ENCODE measurements at regions of chr7 and their contacts with region 1.

Region 1: GRCh38 chr7:51141451-51142003 is 175.1 kb downstream of the COBL start:
- H3K4me3 ChIP-seq: no peak overlapping the region
- H3K27ac ChIP-seq: no peak overlapping the region
- H3K4me1 ChIP-seq: no peaks in the 10 kb centered on the region
- CTCF ChIP-seq: peak; percentile 39; the same call in 1 of the 2 replicates

Region 2: GRCh38 chr7:50664461-50664922 is 477.0 kb before region 1 on chr7:
- CTCF ChIA-PET with region 1: no interaction called
- POLR2A ChIA-PET with region 1: no interaction called
- H3K4me3 ChIP-seq: no peak overlapping the region
- H3K27ac ChIP-seq: no peak overlapping the region
- H3K4me1 ChIP-seq: no peaks in the 10 kb centered on the region
- CTCF ChIP-seq: no peak

Region 3: DNA sequence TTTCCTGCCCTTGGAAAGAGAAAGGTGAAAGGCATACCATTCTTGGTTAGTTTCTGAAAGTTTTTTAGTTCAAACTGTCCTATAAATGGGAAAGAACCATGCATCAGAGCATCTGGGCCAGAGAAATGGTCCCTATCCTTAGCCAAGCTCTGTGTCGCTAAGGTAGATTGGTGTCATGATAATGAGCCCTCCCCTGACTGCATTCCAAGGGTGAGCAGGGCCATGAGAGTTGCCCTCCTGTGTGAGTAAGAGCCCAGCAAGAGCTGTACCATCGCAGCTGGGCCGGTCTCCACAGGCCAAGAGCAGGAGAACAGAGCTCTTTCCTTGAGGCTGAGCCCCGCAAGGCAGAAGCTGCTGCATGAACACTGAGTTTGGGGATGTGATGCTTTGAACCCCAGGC is 389.1 kb before region 1 on chr7:
- CTCF ChIA-PET with region 1: interaction called, 10 read pairs
- POLR2A ChIA-PET with region 1: no interaction called
- H3K4me3 ChIP-seq: no peak overlapping the region
- H3K27ac ChIP-seq: no peak overlapping the region
- H3K4me1 ChIP-seq: peaks cover 9% of the 10 kb centered on the region; the same call in 1 of the 2 replicates
- CTCF ChIP-seq: no peak

Region 4: DNA sequence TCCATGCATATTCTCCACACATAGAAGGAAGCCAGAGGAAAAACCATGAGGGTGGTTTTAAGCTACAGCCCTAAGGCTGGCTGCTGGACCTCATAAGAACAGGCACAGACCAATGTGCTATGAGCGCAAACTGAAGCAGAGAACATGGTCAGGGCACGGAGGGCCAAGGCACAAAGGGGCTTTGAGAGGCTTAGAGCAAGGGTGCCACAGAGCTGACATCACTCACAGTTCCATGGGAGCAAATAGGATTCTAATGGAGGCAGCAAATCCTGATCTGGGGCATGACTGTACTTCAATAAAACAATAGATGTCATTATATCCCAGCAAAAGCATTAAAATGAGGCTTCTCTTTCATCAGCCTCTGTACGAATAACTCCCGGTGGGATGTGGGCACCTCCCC is 12.7 kb after region 1 on chr7:
- CTCF ChIA-PET with region 1: interaction called, 17 read pairs
- POLR2A ChIA-PET with region 1: no interaction called
- H3K4me3 ChIP-seq: no peak overlapping the region
- H3K27ac ChIP-seq: no peak overlapping the region
- H3K4me1 ChIP-seq: no peaks in the 10 kb centered on the region
- CTCF ChIP-seq: no peak

Region 5: DNA sequence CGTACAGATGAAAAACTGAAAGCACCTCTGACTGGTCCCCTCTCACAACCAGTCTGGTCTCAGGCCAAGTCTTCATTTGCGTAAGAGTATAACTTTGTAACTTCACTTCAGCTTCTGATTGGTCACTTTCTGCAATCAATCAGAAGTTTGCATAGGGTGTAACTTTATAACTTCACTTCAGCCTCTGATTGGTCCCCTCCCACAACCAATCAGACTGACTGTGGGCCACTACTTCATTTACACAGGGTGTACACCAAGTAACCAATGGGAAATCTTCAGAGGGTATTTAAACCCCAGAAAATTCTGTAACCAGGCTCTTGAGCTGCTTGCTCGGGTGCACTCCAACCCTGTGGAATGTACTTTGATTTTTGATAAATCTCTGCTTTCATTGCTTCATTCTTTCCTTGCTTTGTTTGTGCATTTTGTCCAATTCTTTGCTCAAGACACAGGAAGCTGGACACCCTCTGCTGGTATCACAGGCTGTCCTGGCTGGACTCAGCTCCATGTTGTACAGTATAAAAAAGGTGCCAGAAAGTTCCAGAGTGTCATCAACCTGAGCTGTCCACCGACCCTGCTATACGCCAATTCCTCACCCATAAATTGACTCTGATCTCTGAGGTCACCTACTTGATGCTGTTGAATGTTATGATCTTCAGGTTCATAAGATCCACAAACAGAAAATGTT is 100.6 kb after region 1 on chr7:
- CTCF ChIA-PET with region 1: no interaction called
- POLR2A ChIA-PET with region 1: no interaction called
- H3K4me3 ChIP-seq: no peak overlapping the region
- H3K27ac ChIP-seq: no peak overlapping the region
- H3K4me1 ChIP-seq: no peaks in the 10 kb centered on the region
- CTCF ChIP-seq: no peak

Measured in HEK293 (cell line).